Activated CD8-positive, alpha-beta memory T cell treated with anti-CD3 and anti-CD28 coated beads, Interleukin-2, amount 10 ng/mL, durations not matched to agents 7 days and 5 days (primary cell): ENCODE measurements at regions of chr2 and their contacts with region 1.

Region 1: DNA sequence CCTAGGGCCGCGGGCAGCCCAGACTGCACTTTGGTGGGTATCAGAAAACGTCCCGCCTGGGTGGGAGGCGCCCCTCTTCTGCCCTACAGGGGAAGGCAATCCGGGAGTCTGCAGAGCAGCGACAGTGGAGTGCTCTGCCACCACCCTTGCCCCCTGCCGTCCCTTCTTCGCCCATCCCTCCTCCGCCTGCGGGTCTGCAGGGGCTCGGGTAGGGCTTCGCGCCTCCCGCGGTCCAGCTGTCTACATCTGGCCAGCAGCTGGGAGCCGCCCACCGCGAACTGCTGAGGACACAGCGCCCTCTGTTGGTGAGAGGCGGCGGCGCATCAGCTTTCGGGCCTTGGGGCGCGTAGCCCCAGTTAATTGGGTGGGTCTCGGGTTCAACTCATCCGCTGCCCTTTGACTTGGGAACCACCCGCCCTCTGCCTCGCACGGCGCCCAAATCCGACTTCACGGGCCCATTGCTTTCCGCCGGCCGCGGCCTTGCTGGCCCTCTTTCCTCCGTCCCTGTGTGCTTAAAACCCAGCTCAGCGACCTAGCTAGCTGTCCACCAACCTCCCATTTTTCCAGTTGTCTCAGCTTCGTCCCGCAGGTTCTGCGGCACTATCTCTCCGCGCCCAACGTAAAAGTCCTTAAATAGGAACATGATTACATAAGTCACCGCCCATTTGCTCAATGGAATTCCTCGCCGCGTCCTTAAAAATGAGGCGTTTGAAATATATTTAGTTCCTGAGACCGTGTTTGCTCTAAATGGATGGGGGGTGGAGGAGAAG is 17.6 kb downstream of the WNT10A start:
- DNase-seq: peak; percentile 84
- ATAC-seq: peak; percentile 57
- H3K4me3 Mint-ChIP-seq: no peak overlapping the region
- H3K27ac Mint-ChIP-seq: no peak overlapping the region
- H3K4me1 Mint-ChIP-seq: peaks cover 39% of the 10 kb centered on the region
- H3K27me3 Mint-ChIP-seq: peaks cover 64% of the 10 kb centered on the region

Region 2: DNA sequence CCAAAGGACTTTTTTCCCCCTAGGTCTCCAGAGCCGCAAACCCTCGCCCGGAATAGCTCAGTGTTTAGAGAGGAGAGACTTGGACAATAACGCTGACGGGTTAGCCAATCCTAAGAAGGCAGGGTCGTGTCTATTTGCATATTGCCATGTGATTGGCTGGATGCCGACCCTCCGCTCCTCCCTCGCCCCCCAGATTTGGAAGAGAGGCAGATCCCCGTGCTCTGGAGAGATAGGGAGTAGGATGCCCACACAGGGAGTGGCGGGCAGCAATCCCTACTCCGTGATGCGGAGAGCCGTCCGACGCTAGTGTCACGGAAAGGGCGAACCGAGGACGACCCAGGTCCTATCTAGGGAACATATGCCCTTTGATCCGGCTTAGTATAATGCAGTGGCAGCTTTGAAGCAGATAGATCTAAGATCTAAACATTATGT is 37.3 kb before region 1 on chr2:
- CTCF ChIA-PET with region 1: interaction called, 27 read pairs
- DNase-seq: no peak
- ATAC-seq: no peak
- H3K4me3 Mint-ChIP-seq: no peak overlapping the region
- H3K27ac Mint-ChIP-seq: no peak overlapping the region
- H3K4me1 Mint-ChIP-seq: peaks cover 10% of the 10 kb centered on the region
- H3K27me3 Mint-ChIP-seq: peaks cover 74% of the 10 kb centered on the region

Region 3: DNA sequence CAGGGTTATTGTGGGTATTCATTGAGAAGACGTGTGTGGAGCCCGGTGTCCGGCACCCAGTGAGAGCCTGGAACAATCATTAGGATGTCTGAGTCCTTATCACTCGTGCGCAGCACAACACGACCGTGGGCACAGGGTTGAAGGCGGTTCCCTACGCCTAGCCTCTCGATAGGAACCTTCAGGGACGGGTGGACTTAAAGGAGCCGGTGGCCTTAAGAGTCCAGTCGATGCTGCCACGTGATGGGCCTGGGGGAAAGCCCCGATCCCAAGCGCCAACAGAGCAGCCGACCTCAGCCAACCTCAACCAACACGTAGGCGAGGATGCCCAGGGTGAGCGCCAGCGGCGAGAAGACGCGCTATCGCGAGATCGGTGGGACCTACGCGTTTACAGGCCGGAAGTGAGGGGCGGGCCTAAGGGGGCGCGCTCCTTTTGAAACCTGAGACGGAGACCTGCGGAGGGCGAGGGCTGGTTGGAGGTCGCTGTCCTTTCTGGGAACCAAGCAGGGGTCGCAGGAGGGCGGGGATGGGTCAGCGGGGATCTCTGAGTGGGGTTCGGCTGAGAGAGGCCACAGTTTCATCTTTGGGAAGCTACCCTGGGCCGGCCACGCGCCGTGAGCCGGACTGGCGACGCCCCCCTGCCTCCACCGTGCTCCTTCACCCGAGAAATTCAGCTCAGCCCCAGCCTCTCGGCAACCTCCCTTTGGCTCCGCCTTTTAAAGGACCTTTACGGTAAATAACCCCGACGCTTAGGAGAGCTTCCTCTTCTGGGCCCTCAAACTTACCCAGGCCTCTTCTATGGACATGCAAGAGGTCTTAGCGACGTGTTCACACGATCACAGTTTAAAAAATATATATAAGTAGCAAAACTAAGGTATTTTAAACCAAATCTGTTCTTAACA is 10.7 kb after region 1 on chr2:
- CTCF ChIA-PET with region 1: interaction called, 88 read pairs
- DNase-seq: peak; percentile 95
- ATAC-seq: peak; percentile 98
- H3K4me3 Mint-ChIP-seq: peak overlapping the region; percentile 82
- H3K27ac Mint-ChIP-seq: peak overlapping the region; percentile 84
- H3K4me1 Mint-ChIP-seq: peaks cover 17% of the 10 kb centered on the region
- H3K27me3 Mint-ChIP-seq: peaks cover 27% of the 10 kb centered on the region

Region 4: GRCh38 chr2:218995972-218996711 is 97.8 kb after region 1 on chr2:
- CTCF ChIA-PET with region 1: interaction called, 16 read pairs
- DNase-seq: peak; percentile 80
- ATAC-seq: peak; percentile 66
- H3K4me3 Mint-ChIP-seq: no peak overlapping the region
- H3K27ac Mint-ChIP-seq: no peak overlapping the region
- H3K4me1 Mint-ChIP-seq: peaks cover 2% of the 10 kb centered on the region
- H3K27me3 Mint-ChIP-seq: peaks cover 84% of the 10 kb centered on the region